ENCODE measurements at regions of chr12 and their contacts with region 1.

Region 1: DNA sequence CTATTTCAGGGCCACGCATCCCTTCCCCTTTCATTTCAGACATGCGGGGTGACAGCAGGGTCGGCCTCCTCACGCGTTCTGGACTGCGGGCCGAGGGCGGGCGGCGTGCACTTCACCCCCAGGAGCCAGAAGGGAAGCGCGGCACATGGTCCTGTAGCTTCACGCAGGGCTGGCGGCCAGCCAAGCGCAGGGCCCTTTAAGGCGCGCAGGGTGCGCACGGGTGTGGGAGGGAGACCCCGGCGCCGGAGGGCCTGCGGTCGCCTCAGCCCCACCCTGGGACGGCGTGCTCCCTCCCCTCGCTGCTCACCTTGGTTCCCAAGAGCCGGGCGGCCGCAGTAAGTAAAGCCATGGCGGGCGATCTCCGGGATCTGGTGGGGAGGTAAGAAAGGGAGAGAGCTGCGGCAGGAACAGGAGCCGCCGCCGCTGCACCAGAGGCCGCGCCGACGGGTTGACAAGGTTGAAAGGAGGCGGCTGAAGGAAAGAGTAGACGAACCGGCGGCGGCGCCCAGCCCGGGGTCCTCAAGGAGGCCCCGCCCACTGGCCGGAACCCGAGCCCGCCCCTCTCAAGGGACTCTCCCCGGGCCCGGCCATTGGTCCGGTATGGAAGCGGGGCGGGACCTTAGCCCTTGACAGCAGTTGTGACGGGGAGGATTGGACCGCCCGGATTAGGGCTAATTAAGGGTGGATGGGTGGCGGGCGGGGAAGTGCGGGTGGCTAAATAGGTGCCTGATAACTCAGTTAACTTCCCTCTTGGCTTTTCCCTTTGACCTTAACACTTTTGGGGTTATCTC is at the start of gene CS:
- DNase-seq: peak; percentile 97
- ATAC-seq: peak; percentile 96
- H3K4me3 Mint-ChIP-seq: peak within 1 kb of the TSS; percentile 96
- H3K27ac Mint-ChIP-seq: peak within 1 kb of the TSS; percentile 97
- H3K4me1 Mint-ChIP-seq: peaks cover 59% of the 10 kb centered on the region
- H3K27me3 Mint-ChIP-seq: no peaks in the 10 kb centered on the region
- CTCF ChIP-seq: no peak
- total RNA-seq, gene CS: 229 and 233 TPM in 2 replicates

Region 2: DNA sequence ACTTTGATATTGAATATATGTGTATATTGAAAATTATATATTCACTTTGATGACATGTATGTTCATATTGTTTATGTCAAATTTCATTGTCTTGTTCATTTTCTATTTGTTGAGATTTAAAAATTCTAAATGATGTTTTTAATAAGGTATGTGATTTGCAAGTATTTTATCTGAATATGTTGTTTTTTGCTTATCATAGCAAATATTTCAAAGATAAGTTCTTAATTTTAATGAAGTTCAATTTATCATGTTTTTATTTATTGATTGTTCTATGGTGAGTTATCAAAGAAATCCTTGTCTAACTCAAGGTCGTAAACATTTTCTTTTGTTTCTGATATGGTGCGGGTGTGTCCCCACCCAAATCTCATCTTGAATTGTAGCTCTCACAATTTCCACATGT is 1128.6 kb before region 1 on chr12:
- CTCF ChIA-PET with region 1: no interaction called
- POLR2A ChIA-PET with region 1: no interaction called
- intact Hi-C with region 1: no loop called
- DNase-seq: no peak
- ATAC-seq: no peak
- H3K4me3 Mint-ChIP-seq: no peak overlapping the region
- H3K27ac Mint-ChIP-seq: no peak overlapping the region
- H3K4me1 Mint-ChIP-seq: no peaks in the 10 kb centered on the region
- H3K27me3 Mint-ChIP-seq: peaks cover 6% of the 10 kb centered on the region
- CTCF ChIP-seq: no peak

Region 3: DNA sequence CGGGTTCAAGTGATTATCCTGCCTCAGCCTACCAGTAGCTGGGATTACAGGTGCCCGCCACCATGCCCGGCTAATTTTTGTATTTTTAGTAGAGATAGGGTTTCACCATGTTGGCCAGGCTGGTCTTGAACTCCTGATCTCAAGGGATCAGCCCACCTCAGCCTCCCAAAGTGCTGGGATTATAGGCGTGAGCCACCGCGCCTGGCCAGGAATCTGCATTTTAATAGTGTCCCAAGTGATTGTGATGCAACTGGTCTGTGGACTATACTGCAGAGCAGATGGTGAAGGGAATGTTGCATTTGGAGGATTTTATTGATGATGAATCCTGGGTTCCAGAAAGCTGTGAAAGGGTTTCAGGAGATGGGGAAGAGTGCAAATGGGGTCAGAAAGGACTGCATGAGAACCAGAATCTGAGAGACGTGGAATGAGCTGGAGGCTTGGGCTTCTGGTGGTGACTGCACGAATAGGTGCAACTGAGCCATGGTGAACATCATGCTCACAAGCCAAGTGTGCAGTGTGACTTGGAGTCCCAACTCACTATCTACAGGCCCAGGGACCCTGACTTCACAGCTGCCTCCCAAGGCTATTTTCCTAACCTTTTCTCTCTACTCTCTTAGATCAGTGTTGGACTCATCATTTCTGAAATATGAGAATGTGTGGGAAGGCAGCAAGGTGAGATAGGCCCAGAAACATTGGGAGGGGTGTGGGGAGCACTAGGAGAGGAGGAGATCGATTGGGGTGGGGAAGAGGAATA is 253.8 kb before region 1 on chr12:
- CTCF ChIA-PET with region 1: no interaction called
- POLR2A ChIA-PET with region 1: no interaction called
- intact Hi-C with region 1: no loop called
- DNase-seq: no peak
- ATAC-seq: no peak
- H3K4me3 Mint-ChIP-seq: no peak overlapping the region
- H3K27ac Mint-ChIP-seq: peak overlapping the region; percentile 59
- H3K4me1 Mint-ChIP-seq: peaks cover 33% of the 10 kb centered on the region
- H3K27me3 Mint-ChIP-seq: no peaks in the 10 kb centered on the region
- CTCF ChIP-seq: no peak

Region 4: DNA sequence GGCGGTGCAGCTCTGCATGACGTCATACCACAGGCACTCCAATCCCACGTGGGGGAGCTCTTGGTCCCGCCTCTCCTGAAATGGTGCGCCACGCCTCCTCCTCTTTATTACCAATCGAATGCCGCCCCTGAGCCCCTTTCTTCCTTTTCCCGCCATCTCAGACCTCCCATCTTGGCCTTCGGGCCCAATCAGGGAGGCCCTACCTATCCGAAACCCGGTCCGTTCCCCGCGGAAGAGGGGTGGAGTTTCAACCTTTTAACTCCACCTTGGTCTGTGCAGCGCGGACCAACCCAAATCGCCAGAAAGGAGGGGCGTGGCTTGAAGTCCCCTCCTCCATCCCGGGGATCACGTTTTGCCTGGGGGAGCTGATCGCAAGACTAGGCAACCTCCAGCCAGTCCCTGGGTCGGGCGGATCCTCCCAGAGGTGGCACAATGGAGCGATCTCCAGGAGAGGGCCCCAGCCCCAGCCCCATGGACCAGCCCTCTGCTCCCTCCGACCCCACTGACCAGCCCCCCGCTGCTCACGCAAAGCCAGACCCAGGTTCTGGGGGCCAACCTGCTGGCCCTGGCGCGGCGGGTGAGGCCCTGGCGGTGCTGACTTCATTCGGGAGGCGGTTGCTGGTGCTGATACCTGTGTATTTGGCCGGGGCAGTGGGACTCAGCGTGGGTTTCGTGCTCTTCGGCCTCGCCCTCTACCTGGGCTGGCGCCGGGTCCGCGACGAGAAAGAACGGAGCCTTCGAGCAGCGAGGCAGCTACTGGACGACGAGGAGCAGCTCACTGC is 172.0 kb before region 1 on chr12 and contains the start of gene ESYT1:
- CTCF ChIA-PET with region 1: no interaction called
- POLR2A ChIA-PET with region 1: interaction called, 8 read pairs
- intact Hi-C with region 1: loop called (anchors 1 kb)
- DNase-seq: peak; percentile 83
- ATAC-seq: peak; percentile 86
- H3K4me3 Mint-ChIP-seq: peak within 1 kb of the TSS; percentile 97
- H3K27ac Mint-ChIP-seq: peak within 1 kb of the TSS; percentile 98
- H3K4me1 Mint-ChIP-seq: peaks cover 69% of the 10 kb centered on the region
- H3K27me3 Mint-ChIP-seq: no peaks in the 10 kb centered on the region
- CTCF ChIP-seq: no peak
- total RNA-seq, gene ESYT1: 120 and 137 TPM in 2 replicates

Region 5: GRCh38 chr12:56198836-56199235 is 101.2 kb before region 1 on chr12:
- CTCF ChIA-PET with region 1: no interaction called
- POLR2A ChIA-PET with region 1: no interaction called
- intact Hi-C with region 1: no loop called
- DNase-seq: no peak
- ATAC-seq: no peak
- H3K4me3 Mint-ChIP-seq: no peak overlapping the region
- H3K27ac Mint-ChIP-seq: peak overlapping the region; percentile 5
- H3K4me1 Mint-ChIP-seq: peaks cover 6% of the 10 kb centered on the region
- H3K27me3 Mint-ChIP-seq: no peaks in the 10 kb centered on the region
- CTCF ChIP-seq: no peak

Region 6: DNA sequence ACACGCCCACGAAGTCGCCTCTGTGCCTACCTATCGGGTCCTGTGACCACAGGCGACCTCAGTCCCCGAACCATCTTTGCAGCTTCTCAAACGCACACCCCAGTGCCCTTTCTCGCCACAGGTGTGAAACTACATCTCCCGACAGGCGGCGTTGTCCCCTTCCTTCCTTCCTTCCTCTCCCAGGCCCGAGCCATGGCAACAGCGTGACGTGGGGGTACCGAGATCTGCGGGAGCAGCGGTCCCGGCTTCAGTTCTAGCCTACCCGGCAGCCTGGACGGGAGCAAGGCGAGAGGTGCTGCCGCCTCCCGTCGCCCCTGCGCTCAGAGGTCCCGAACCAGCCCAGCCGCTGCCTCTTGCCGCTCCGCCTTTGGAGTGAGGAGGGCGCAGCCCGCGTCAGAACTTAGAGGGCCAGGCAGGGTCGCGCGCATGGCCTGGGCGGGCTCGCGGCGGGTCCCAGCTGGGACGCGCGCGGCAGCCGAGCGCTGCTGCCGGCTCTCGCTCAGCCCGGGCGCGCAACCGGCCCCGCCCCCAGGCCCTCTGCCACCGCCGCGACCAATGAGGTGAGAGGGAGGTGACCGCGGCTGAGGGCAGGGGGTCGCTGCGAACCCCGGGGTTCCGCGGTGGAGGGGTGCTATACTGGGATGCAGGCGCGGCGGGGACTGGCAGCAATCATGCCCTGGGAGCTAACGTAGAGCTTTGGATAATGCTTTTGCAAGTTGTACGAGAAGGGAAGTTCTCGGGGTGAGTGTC is 33.2 kb before region 1 on chr12 and contains the start of gene COQ10A:
- CTCF ChIA-PET with region 1: no interaction called
- POLR2A ChIA-PET with region 1: interaction called, 8 read pairs
- intact Hi-C with region 1: loop called (anchors 1 kb)
- DNase-seq: peak; percentile 90
- ATAC-seq: peak; percentile 90
- H3K4me3 Mint-ChIP-seq: peak within 1 kb of the TSS; percentile 93
- H3K27ac Mint-ChIP-seq: peak within 1 kb of the TSS; percentile 93
- H3K4me1 Mint-ChIP-seq: peaks cover 18% of the 10 kb centered on the region
- H3K27me3 Mint-ChIP-seq: no peaks in the 10 kb centered on the region
- CTCF ChIP-seq: no peak
- total RNA-seq, gene COQ10A: 30.2 and 35.6 TPM in 2 replicates

Region 7: GRCh38 chr12:56333679-56334489 is 33.8 kb after region 1 on chr12 and contains the start of gene PAN2:
- CTCF ChIA-PET with region 1: no interaction called
- POLR2A ChIA-PET with region 1: interaction called, 10 read pairs
- intact Hi-C with region 1: loop called (anchors 1 kb)
- DNase-seq: peak; percentile 85
- ATAC-seq: peak; percentile 91
- H3K4me3 Mint-ChIP-seq: peak within 1 kb of the TSS; percentile 96
- H3K27ac Mint-ChIP-seq: peak within 1 kb of the TSS; percentile 100
- H3K4me1 Mint-ChIP-seq: peaks cover 46% of the 10 kb centered on the region
- H3K27me3 Mint-ChIP-seq: no peaks in the 10 kb centered on the region
- CTCF ChIP-seq: no peak
- total RNA-seq, gene PAN2: 86.3 and 98.9 TPM in 2 replicates

Region 8: GRCh38 chr12:56437430-56438176 is 137.6 kb after region 1 on chr12:
- CTCF ChIA-PET with region 1: no interaction called
- POLR2A ChIA-PET with region 1: no interaction called
- intact Hi-C with region 1: no loop called
- DNase-seq: no peak
- ATAC-seq: no peak
- H3K4me3 Mint-ChIP-seq: no peak overlapping the region
- H3K27ac Mint-ChIP-seq: no peak overlapping the region
- H3K4me1 Mint-ChIP-seq: peaks cover 3% of the 10 kb centered on the region
- H3K27me3 Mint-ChIP-seq: no peaks in the 10 kb centered on the region
- CTCF ChIP-seq: no peak

Measured in activated B cell treated with CpG ODN at 0.5 μM for 24 hours (primary cell).